CD4-positive, alpha-beta T cell (primary cell): ENCODE measurements at regions of chr12 and their contacts with region 1.

Region 1: GRCh38 chr12:49366652-49367380 is 446 bp upstream of the SPATS2 start:
- DNase-seq: peak; percentile 69 to 92 (median 81)
- ATAC-seq: peak; percentile 82
- H3K4me3 ChIP-seq: peak overlapping the region; percentile 88
- H3K4me3 Mint-ChIP-seq: peak overlapping the region; percentile 99
- H3K27ac ChIP-seq: peak overlapping the region; percentile 66 to 70
- H3K27ac Mint-ChIP-seq: peak overlapping the region; percentile 76
- H3K4me1 ChIP-seq: peaks cover 15% of the 10 kb centered on the region
- H3K4me1 Mint-ChIP-seq: peaks cover 30% of the 10 kb centered on the region
- H3K27me3 ChIP-seq: no peaks in the 10 kb centered on the region
- H3K27me3 Mint-ChIP-seq: no peaks in the 10 kb centered on the region
- CTCF ChIP-seq: no peak

Region 2: DNA sequence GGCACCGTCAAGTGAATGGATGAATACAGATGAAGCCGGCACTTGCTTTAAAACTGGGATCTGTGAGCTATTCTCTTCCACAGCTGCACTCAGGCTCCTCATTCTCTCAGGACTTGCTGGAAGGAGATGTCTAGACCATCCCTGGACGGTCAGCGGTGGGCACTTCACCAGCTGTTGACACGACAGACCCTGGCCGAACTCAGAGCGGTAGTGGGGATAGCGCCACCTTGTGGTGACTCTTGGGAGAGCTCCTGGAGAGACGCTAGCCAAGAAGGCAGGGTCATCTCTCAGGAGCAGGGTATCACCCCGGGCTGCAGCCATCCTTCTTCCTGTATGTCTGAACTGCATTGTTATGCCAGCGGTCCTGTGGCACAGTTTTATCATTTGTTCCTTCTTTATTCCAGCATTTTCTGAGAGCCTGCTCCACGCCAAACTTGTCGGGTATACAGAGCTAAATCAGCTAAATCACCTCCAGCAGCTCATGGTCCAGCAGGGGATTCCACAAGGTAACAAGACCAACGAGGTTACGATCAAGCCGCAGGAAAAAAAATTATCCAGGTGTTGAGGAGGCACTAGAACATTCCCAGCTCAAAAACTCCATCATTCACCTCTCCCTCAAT is 378.7 kb before region 1 on chr12:
- CTCF ChIA-PET with region 1: no interaction called
- POLR2A ChIA-PET with region 1: no interaction called
- intact Hi-C with region 1: no loop called
- DNase-seq: peak; percentile 50 to 85 (median 68)
- ATAC-seq: peak; percentile 76
- H3K4me3 ChIP-seq: no peak overlapping the region
- H3K4me3 Mint-ChIP-seq: no peak overlapping the region
- H3K27ac ChIP-seq: no peak overlapping the region
- H3K27ac Mint-ChIP-seq: no peak overlapping the region
- H3K4me1 ChIP-seq: peaks cover 7% of the 10 kb centered on the region
- H3K4me1 Mint-ChIP-seq: peaks cover 6% of the 10 kb centered on the region
- H3K27me3 ChIP-seq: peaks cover 0 to 23% of the 10 kb centered on the region in 2 experiments
- H3K27me3 Mint-ChIP-seq: peaks cover 50% of the 10 kb centered on the region
- CTCF ChIP-seq: peak; percentile 81

Region 3: DNA sequence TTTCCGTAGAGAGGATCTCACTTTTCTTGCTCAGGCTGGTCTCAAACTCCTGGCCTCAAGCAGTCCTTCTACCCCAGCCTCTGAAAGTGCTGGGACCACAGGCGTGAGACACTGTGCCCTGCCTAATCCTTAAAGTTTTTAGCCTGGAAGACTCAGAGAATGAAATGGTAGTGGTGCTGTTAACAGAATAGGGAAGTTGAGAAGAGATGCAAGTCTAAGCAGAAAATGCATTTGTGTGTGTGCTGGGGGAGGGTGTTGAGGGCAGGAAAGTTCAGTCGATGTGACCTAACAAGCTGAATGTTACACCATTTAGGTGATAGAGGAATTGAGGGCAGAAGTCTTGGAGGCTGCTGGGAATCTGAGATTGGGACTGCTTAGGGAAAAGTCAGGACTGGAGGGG is 171.1 kb before region 1 on chr12:
- CTCF ChIA-PET with region 1: no interaction called
- POLR2A ChIA-PET with region 1: no interaction called
- intact Hi-C with region 1: no loop called
- DNase-seq: no peak
- ATAC-seq: no peak
- H3K4me3 ChIP-seq: no peak overlapping the region
- H3K4me3 Mint-ChIP-seq: no peak overlapping the region
- H3K27ac ChIP-seq: no peak overlapping the region
- H3K27ac Mint-ChIP-seq: no peak overlapping the region
- H3K4me1 ChIP-seq: no peaks in the 10 kb centered on the region
- H3K4me1 Mint-ChIP-seq: no peaks in the 10 kb centered on the region
- H3K27me3 ChIP-seq: peaks cover 0 to 3% of the 10 kb centered on the region in 2 experiments
- H3K27me3 Mint-ChIP-seq: no peaks in the 10 kb centered on the region
- CTCF ChIP-seq: no peak

Region 4: GRCh38 chr12:49322708-49323523 is 43.9 kb before region 1 on chr12 and contains the start of gene TROAP:
- CTCF ChIA-PET with region 1: interaction called, 6 read pairs
- POLR2A ChIA-PET with region 1: interaction called, 22 read pairs
- intact Hi-C with region 1: no loop called
- DNase-seq: peak; percentile 93 to 99 (median 95)
- ATAC-seq: peak; percentile 95
- H3K4me3 ChIP-seq: peak within 1 kb of the TSS; percentile 89
- H3K4me3 Mint-ChIP-seq: peak within 1 kb of the TSS; percentile 90
- H3K27ac ChIP-seq: peak within 1 kb of the TSS in 1 of 2 donors; percentile 3
- H3K27ac Mint-ChIP-seq: peak within 1 kb of the TSS; percentile 56
- H3K4me1 ChIP-seq: peaks cover 19% of the 10 kb centered on the region
- H3K4me1 Mint-ChIP-seq: peaks cover 19% of the 10 kb centered on the region
- H3K27me3 ChIP-seq: no peaks in the 10 kb centered on the region
- H3K27me3 Mint-ChIP-seq: no peaks in the 10 kb centered on the region
- CTCF ChIP-seq: no peak
- total RNA-seq, gene TROAP: 0.30 to 0.31 TPM